ENCODE measurements at regions of chr20 and their contacts with region 1.

Region 1: DNA sequence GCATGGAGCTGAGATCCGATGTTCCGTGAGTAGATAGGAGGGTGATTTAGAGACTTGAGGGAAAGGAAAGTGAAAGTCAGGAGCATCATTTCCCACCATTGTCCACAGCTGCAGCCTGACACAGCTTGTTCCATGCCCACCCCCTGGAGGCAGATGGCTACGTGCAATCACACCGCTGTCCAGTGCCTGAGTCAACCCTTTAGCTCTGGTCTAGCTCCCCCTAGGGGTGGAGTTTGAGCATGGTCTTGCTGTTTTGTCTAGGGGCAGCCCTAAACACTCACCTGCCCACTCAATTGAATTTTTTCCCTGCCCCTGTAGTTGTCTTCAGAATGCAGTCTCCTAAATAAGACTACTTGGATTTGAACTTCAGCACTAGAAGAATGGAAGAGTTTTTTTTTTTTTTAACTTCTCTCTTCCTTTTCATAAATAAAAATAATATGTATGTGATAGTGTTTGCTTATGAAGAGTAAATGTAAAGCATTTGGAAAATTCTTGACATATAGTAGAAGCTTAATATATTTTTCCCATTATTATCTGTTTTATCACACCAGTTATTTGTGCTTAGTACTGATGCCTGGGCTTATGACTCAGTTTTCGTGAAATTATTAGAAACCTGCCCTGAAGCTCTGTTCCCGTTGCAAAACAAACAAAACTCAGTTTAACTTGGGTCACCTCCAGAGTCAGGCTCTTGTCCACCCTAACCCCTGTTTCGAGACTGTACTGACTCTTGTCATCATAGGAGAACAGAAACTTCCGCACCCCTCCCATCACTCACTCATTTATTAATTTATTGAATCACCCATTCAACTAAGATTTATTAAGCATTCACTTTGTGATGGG is 814.8 kb downstream of the MAFB start:
- DNase-seq: peak; percentile 67
- H3K4me3 ChIP-seq: no peak overlapping the region
- H3K27ac ChIP-seq: no peak overlapping the region
- H3K4me1 ChIP-seq: peaks cover 13% of the 10 kb centered on the region
- H3K27me3 ChIP-seq: no peaks in the 10 kb centered on the region
- CTCF ChIP-seq: peak; percentile 93 to 97

Region 2: GRCh38 chr20:39112178-39112743 is 762.0 kb before region 1 on chr20:
- CTCF ChIA-PET with region 1: no interaction called
- dilution Hi-C with region 1: no loop called
- in situ Hi-C with region 1: no loop called
- intact Hi-C with region 1: loop called (anchors 1 kb)
- DNase-seq: peak; percentile 4
- H3K4me3 ChIP-seq: no peak overlapping the region
- H3K27ac ChIP-seq: no peak overlapping the region
- H3K4me1 ChIP-seq: no peaks in the 10 kb centered on the region
- H3K27me3 ChIP-seq: no peaks in the 10 kb centered on the region
- CTCF ChIP-seq: peak; percentile 52 to 70

Region 3: DNA sequence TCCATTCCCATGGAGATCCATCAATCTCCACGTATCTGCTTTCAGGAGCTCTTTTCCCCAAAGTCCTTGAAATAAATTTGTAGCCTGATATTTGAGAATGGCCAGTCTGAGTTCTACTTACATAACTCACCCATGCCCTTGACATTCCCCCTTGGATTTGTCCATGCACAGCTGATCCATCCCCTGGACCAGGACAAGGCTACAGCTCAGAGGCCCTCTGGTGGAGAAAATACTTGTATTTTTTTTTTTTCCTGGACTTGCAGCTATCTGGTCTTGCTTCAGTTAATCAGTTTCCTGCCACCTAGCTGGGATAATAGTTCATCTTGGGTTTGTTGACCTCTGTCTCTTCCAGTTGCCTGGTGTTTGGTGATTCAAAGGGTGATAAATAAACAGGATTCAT is 444.6 kb before region 1 on chr20:
- CTCF ChIA-PET with region 1: no interaction called
- dilution Hi-C with region 1: no loop called
- in situ Hi-C with region 1: no loop called
- intact Hi-C with region 1: loop called (anchors 10 kb)
- DNase-seq: no peak
- H3K4me3 ChIP-seq: no peak overlapping the region
- H3K27ac ChIP-seq: no peak overlapping the region
- H3K4me1 ChIP-seq: no peaks in the 10 kb centered on the region
- H3K27me3 ChIP-seq: no peaks in the 10 kb centered on the region
- CTCF ChIP-seq: peak in 1 of 2 donors; percentile 30

Region 4: DNA sequence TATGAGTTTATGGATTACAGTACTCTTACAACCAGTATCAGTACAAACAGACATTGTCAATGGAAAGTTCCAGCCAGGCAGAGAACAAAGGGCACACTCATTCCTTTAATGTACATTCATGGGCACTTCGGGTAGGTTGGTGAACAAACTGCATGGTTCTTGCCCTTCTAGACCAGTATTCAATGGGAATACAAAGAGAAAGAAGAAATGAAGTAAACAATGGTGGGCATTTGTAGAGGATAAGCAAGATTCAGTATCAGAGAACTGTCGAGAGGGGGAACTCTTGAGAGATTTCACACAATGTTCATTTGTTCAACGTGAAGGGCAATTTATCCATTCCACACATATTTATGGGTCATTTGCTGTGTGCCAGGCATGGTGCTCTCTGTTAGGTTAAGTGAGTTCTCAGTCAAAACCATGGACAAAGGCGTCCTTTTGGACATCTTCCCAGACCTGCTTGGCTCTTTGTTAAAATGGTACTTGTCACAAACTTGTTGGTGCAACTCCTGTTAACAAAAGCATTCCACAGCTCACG is 197.3 kb before region 1 on chr20:
- CTCF ChIA-PET with region 1: no interaction called
- dilution Hi-C with region 1: no loop called
- in situ Hi-C with region 1: no loop called
- intact Hi-C with region 1: loop called (anchors 1 kb)
- DNase-seq: peak; percentile 12
- H3K4me3 ChIP-seq: no peak overlapping the region
- H3K27ac ChIP-seq: no peak overlapping the region
- H3K4me1 ChIP-seq: no peaks in the 10 kb centered on the region
- H3K27me3 ChIP-seq: no peaks in the 10 kb centered on the region
- CTCF ChIP-seq: peak; percentile 17 to 40

Region 5: DNA sequence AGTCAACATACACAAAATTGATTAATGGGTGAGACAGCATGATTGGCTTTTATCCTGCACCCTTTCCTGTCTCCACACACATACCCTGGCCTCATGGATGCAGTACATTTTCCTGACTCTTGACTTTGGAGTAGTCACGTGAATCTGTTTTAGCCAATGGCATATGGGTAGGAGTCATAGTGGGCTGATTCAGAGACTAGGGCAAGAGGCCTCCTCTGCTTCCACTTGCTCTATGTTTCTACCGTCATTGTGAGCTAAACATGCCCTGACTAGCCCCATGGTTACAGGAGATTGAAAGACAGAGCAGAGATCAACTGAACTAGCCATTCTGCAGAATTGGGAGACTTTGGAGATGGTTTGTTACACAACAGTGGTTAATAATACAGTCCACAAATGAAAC is 62.2 kb before region 1 on chr20:
- CTCF ChIA-PET with region 1: interaction called, 16 read pairs
- dilution Hi-C with region 1: no loop called
- in situ Hi-C with region 1: no loop called
- intact Hi-C with region 1: no loop called
- DNase-seq: peak; percentile 96
- H3K4me3 ChIP-seq: no peak overlapping the region
- H3K27ac ChIP-seq: peak overlapping the region; percentile 48
- H3K4me1 ChIP-seq: peaks cover 17% of the 10 kb centered on the region
- H3K27me3 ChIP-seq: no peaks in the 10 kb centered on the region
- CTCF ChIP-seq: no peak

Measured in mammary epithelial cell (primary cell).